Activated T-helper 1 cell treated with anti-CD3 and anti-CD28 coated beads, Interleukin-12 subunit alpha, Interleukin-12 subunit beta, Interleukin-2, Interleukin-4 antibody, amounts not matched to agents 30 ng/mL and 10 ng/mL and 1 ng/mL, durations not matched to agents 14 hours and 24 hours and 36 hours (primary cell): ENCODE measurements at regions of chr15 and their contacts with region 1.

Region 1: DNA sequence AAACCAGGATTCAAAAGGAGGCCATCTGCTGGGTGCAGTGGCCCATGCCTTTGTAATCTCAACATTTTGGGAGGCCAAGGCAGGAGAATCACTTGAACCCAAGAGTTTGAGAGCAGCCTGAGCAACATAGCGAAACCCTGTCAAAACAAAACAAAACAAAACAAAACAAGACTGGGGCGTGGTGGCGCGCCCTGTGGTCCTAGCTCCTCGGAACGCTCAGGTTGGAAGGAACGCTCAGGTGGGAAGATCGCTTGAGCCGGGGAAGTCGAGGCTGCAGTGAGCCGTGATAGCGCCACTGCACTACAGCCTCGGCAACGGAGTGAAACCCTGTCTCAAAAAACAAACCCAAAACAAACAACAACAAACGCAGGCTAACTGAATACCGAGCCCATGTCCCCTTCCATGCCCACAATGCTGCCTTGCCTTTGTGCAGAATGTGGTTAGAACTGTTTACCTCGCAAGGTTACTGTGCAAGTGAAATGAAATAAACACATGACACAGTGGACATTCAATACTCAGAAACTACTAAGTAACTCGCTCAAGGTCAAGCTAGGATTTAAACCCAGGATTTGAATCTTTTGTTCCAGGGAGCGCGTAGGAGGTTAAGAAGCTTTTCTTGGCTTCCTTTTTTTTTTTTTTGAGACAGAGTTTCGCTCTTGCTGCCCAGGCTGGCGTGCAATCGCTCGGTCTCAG is 766 bp upstream of the EMC4 start:
- DNase-seq: no peak
- H3K4me3 Mint-ChIP-seq: peak overlapping the region; percentile 90
- H3K27ac Mint-ChIP-seq: peak overlapping the region; percentile 98
- H3K4me1 Mint-ChIP-seq: peaks cover 35% of the 10 kb centered on the region
- H3K27me3 Mint-ChIP-seq: no peaks in the 10 kb centered on the region

Region 2: DNA sequence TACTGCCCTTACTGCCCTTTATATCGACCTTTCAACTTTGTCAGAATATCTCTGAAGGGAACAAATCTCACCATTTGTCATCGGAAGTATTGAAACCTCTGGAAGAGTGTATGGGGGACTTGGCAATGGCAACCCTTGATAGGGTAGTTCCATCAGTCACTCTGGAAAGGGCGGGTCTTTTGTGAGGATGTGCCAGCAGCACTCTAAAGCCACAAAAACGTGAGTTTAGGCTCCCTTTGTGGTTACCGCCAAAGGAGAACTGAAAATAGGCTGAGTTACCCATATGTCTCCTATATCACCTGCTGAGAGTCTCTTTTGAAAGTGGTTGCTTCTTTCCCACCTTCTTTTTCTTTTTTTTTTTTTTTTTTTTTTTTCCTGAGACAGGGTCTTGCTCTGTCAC is 552.6 kb before region 1 on chr15:
- intact Hi-C with region 1: no loop called
- DNase-seq: no peak
- H3K4me3 Mint-ChIP-seq: no peak overlapping the region
- H3K27ac Mint-ChIP-seq: no peak overlapping the region
- H3K4me1 Mint-ChIP-seq: no peaks in the 10 kb centered on the region
- H3K27me3 Mint-ChIP-seq: peaks cover 9% of the 10 kb centered on the region

Region 3: GRCh38 chr15:34179234-34179633 is 44.8 kb before region 1 on chr15:
- intact Hi-C with region 1: no loop called
- DNase-seq: no peak
- H3K4me3 Mint-ChIP-seq: no peak overlapping the region
- H3K27ac Mint-ChIP-seq: no peak overlapping the region
- H3K4me1 Mint-ChIP-seq: no peaks in the 10 kb centered on the region
- H3K27me3 Mint-ChIP-seq: no peaks in the 10 kb centered on the region

Region 4: GRCh38 chr15:34209421-34210282 is 14.4 kb before region 1 on chr15 and contains the start of gene KATNBL1:
- intact Hi-C with region 1: loop called (anchors 1 kb)
- DNase-seq: peak; percentile 92
- H3K4me3 Mint-ChIP-seq: peak within 1 kb of the TSS; percentile 89
- H3K27ac Mint-ChIP-seq: peak within 1 kb of the TSS; percentile 72
- H3K4me1 Mint-ChIP-seq: peaks cover 34% of the 10 kb centered on the region
- H3K27me3 Mint-ChIP-seq: peaks cover 5% of the 10 kb centered on the region
- total RNA-seq, gene KATNBL1: 37.6 and 42.1 TPM in 2 replicates

Region 5: DNA sequence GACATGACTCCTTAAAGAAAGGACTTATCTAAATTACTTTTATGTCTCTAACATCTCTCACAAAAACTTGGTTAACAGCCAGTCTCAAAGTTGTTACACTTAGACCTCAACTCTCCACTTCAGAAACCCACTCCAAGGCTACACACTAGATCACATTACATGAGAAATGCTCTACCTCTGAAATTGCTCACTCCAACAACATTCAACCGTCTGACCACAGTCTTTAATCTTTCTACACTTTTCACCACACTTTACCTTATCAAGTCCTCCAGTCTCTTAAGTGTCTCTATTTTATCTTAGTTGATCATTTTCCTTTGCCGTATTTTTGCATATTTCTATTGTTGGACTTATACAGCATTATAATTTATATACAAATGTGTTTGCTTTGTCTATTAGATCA is 107.8 kb after region 1 on chr15:
- intact Hi-C with region 1: loop called (anchors 1 kb)
- DNase-seq: no peak
- H3K4me3 Mint-ChIP-seq: peak overlapping the region; percentile 23
- H3K27ac Mint-ChIP-seq: peak overlapping the region; percentile 78
- H3K4me1 Mint-ChIP-seq: peaks cover 87% of the 10 kb centered on the region
- H3K27me3 Mint-ChIP-seq: no peaks in the 10 kb centered on the region

Region 6: GRCh38 chr15:34342737-34343575 is 118.9 kb after region 1 on chr15 and contains the starts of genes NOP10 and NUTM1:
- intact Hi-C with region 1: loop called (anchors 1 kb)
- DNase-seq: peak; percentile 91
- H3K4me3 Mint-ChIP-seq: no peak within 1 kb of the TSS
- H3K27ac Mint-ChIP-seq: peak within 1 kb of the TSS; percentile 88
- H3K4me1 Mint-ChIP-seq: peaks cover 26% of the 10 kb centered on the region
- H3K27me3 Mint-ChIP-seq: no peaks in the 10 kb centered on the region
- total RNA-seq, gene NOP10: 257 and 267 TPM in 2 replicates
- total RNA-seq, gene NUTM1: not detected in 2 replicates

Region 7: GRCh38 chr15:35545824-35546510 is 1321.9 kb after region 1 on chr15 and contains the start of gene DPH6:
- intact Hi-C with region 1: loop called (anchors 5 kb)
- DNase-seq: peak; percentile 73
- H3K4me3 Mint-ChIP-seq: peak within 1 kb of the TSS; percentile 92
- H3K27ac Mint-ChIP-seq: peak within 1 kb of the TSS; percentile 98
- H3K4me1 Mint-ChIP-seq: peaks cover 10% of the 10 kb centered on the region
- H3K27me3 Mint-ChIP-seq: peaks cover 1% of the 10 kb centered on the region
- total RNA-seq, gene DPH6: 10.7 and 13.1 TPM in 2 replicates